GM12878 (cell line): ENCODE measurements at regions of chr4 and their contacts with region 1.

Region 1: DNA sequence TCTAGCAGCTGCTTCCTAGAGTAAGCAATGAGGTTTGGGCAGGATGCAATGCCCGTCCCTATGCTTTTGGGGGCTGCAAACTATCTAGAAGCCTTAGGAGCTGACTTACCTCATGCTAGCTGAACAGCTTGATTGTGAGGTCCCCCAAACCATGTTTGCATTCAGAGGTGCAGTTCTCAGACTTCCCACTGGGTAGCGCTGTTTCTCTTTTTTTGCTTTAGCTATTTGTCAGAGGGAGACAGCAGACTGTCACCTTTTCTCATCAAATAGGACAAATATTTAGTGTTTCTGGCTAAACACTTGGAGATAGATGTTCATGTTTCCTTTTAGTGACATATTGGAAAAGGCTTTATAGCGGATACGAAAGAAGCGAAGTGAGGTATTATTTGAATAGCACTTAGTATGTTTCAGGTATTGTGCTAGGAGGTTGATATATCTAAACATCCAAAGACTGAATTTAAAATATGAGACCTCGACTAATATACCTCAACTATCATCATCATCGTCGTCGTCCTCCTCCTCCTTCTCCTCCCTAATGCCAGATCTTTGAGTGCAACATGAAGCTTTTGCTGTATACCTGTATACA is 18.7 kb upstream of the TMEM192 start:
- DNase-seq: peak; percentile 41
- ATAC-seq: peak; percentile 96
- H3K4me3 ChIP-seq: no peak overlapping the region
- H3K27ac ChIP-seq: no peak overlapping the region
- H3K4me1 ChIP-seq: peaks cover 5% of the 10 kb centered on the region
- H3K27me3 ChIP-seq: peaks cover 0 to 2% of the 10 kb centered on the region in 2 experiments; a peak in 2 of 4 replicates
- CTCF ChIP-seq: peak; percentile 85 to 96 (median 88)
- EP300 ChIP-seq: no peak
- POLR2A ChIP-seq: no peak
- RAD21 ChIP-seq: peak; percentile 100

Region 2: DNA sequence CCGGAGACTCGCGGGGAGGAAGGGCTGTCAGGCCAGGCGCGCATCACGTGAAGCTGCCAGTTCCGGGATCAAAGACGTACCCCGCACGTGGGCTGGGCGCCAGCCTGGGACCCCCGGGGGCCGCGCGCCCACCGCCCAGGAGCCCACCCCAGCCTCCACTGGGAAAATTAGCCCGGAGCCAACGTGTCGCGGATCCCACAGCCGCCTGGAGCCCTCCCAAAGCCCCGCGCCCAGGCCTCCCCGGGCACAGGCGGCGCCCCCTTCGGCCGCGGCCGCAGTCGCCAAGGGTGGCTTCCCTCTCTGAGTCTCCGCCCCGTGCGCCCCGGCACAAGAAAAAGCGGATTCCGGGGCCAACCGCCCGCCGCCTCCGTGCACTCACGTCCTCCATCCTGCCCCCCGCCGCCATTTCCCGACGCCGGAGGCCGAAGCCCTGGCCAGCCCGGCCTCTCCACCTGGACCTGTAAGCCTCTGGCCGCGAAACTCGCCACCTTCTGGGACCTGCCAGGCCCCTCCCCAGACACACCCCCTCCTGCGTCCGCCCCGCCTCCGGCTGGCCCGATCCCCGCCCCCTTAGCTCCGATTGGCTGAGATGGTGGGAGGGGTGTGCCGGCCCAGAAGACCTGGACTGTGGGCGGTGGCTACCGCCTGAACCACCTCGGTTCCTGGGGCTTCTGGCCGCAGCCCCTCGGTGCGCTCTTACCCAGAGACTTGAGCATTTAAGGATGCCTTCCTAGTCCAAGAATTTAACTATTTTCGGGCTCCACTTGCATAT is 18.8 kb before region 1 on chr4 and contains the start of gene TMEM192:
- CTCF ChIA-PET with region 1: interaction called, 19 read pairs
- POLR2A ChIA-PET with region 1: no interaction called
- RAD21 ChIA-PET with region 1: interaction called, 11 read pairs
- SMC1A ChIA-PET with region 1: interaction called, 4 read pairs
- in situ Hi-C with region 1: no loop called
- intact Hi-C with region 1: no loop called
- DNase-seq: peak; percentile 70
- ATAC-seq: peak; percentile 98
- H3K4me3 ChIP-seq: peak within 1 kb of the TSS; percentile 84
- H3K27ac ChIP-seq: peak within 1 kb of the TSS; percentile 90
- H3K4me1 ChIP-seq: no peaks in the 10 kb centered on the region
- H3K27me3 ChIP-seq: no peaks in the 10 kb centered on the region
- CTCF ChIP-seq: peak; percentile 26 to 58 (median 36); a peak in 5 of 6 replicates
- EP300 ChIP-seq: no peak
- POLR2A ChIP-seq: peak; percentile 84
- RAD21 ChIP-seq: no peak
- polyA plus RNA-seq, gene TMEM192: 1.8 to 3.8 TPM

Region 3: GRCh38 chr4:165201806-165202205 is 70.5 kb after region 1 on chr4:
- CTCF ChIA-PET with region 1: interaction called, 10 read pairs
- POLR2A ChIA-PET with region 1: no interaction called
- RAD21 ChIA-PET with region 1: interaction called, 5 read pairs
- SMC1A ChIA-PET with region 1: interaction called, 6 read pairs
- in situ Hi-C with region 1: no loop called
- intact Hi-C with region 1: no loop called
- DNase-seq: no peak
- ATAC-seq: no peak
- H3K4me3 ChIP-seq: no peak overlapping the region
- H3K27ac ChIP-seq: no peak overlapping the region
- H3K4me1 ChIP-seq: peaks cover 6% of the 10 kb centered on the region
- H3K27me3 ChIP-seq: no peaks in the 10 kb centered on the region
- CTCF ChIP-seq: no peak
- EP300 ChIP-seq: no peak
- POLR2A ChIP-seq: no peak
- RAD21 ChIP-seq: no peak

Region 4: DNA sequence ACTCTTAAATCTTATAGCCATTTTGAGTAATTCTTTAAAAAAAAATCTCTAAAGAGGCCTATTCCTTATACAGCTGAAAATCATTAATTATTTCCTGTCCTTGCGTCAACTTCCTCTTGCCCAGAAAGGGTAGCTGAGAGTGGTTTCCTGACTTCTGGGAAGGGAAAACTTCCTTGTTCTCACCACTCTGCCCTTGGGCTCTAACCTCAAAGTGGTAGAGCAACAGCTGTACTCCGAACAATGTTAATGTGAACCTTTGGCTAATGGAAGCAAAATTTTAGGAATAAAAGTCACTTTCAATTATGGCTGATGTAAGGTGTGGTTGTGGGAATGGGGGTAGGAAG is 91.3 kb after region 1 on chr4:
- CTCF ChIA-PET with region 1: no interaction called
- POLR2A ChIA-PET with region 1: no interaction called
- RAD21 ChIA-PET with region 1: no interaction called
- SMC1A ChIA-PET with region 1: no interaction called
- in situ Hi-C with region 1: no loop called
- intact Hi-C with region 1: no loop called
- DNase-seq: no peak
- ATAC-seq: no peak
- H3K4me3 ChIP-seq: no peak overlapping the region
- H3K27ac ChIP-seq: no peak overlapping the region
- H3K4me1 ChIP-seq: no peaks in the 10 kb centered on the region
- H3K27me3 ChIP-seq: no peaks in the 10 kb centered on the region
- CTCF ChIP-seq: no peak
- EP300 ChIP-seq: no peak
- POLR2A ChIP-seq: no peak
- RAD21 ChIP-seq: no peak

Region 5: GRCh38 chr4:165343353-165344191 is 212.2 kb after region 1 on chr4:
- CTCF ChIA-PET with region 1: interaction called, 98 read pairs
- POLR2A ChIA-PET with region 1: no interaction called
- RAD21 ChIA-PET with region 1: interaction called, 10 read pairs
- SMC1A ChIA-PET with region 1: interaction called, 47 read pairs
- in situ Hi-C with region 1: loop called (anchors 5 kb)
- intact Hi-C with region 1: loop called (anchors 2 kb)
- DNase-seq: no peak
- ATAC-seq: peak; percentile 47
- H3K4me3 ChIP-seq: no peak overlapping the region
- H3K27ac ChIP-seq: no peak overlapping the region
- H3K4me1 ChIP-seq: no peaks in the 10 kb centered on the region
- H3K27me3 ChIP-seq: no peaks in the 10 kb centered on the region
- CTCF ChIP-seq: peak; percentile 19 to 51 (median 43); a peak in 5 of 6 replicates
- EP300 ChIP-seq: no peak
- POLR2A ChIP-seq: no peak
- RAD21 ChIP-seq: peak; percentile 57

Region 6: GRCh38 chr4:165464813-165465381 is 333.6 kb after region 1 on chr4:
- CTCF ChIA-PET with region 1: interaction called, 75 read pairs
- POLR2A ChIA-PET with region 1: no interaction called
- RAD21 ChIA-PET with region 1: interaction called, 24 read pairs
- SMC1A ChIA-PET with region 1: interaction called, 23 read pairs
- in situ Hi-C with region 1: loop called (anchors 5 kb)
- intact Hi-C with region 1: loop called (anchors 1 kb)
- DNase-seq: no peak
- ATAC-seq: peak; percentile 82
- H3K4me3 ChIP-seq: no peak overlapping the region
- H3K27ac ChIP-seq: no peak overlapping the region
- H3K4me1 ChIP-seq: no peaks in the 10 kb centered on the region
- H3K27me3 ChIP-seq: no peaks in the 10 kb centered on the region
- CTCF ChIP-seq: peak; percentile 62 to 82 (median 69)
- EP300 ChIP-seq: no peak
- POLR2A ChIP-seq: no peak
- RAD21 ChIP-seq: peak; percentile 96